ENCODE measurements at regions of chr11 and their contacts with region 1.

Region 1: DNA sequence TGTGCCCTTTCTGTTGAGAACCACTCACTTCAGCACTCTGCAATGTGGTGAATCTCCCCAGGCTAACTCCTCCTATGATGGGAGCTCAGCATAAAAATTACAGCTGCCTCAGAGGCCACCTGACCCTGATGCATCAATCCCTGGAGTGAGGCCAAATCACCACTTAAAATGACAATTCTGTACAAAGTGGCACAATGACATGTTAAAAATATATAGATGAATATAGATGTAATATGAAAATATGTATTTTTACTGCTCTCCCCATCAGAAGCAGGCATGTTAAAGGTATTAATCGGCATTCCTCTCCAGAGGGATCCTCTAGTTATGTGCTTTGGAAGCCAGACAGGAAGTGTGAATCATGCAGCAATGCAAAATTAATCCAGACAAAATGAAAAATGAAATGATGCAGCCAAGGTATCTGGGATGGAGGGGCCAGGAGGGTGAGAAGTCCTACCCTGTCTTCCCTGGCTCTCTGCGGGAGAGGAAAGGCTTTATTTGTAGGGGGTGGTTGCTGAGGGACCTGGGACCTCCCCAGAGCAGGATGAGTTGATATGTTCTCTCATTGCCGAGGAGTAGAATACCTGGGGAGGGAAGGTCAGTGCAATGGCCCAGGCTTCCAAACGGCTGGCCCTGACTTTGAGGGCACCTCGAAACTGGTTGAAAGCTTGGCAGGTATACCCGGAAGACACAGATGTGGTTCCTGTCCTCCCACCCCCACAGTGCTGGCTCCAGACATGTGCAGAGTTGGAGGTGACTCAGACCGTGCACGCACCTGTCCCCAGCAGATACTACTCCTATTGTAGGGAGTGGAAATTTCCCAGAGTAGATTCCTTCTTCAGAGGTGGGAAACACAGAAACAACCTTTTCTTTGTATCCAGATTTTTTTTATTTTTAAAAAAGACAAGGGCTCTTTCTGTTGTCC is 347.9 kb upstream of the NCAM1 start:
- DNase-seq: peak; percentile 76
- H3K4me3 ChIP-seq: no peak overlapping the region
- H3K27ac ChIP-seq: no peak overlapping the region
- H3K4me1 ChIP-seq: peaks cover 60% of the 10 kb centered on the region
- H3K27me3 ChIP-seq: no peaks in the 10 kb centered on the region
- CTCF ChIP-seq: no peak

Region 2: GRCh38 chr11:112634551-112634950 is 21.2 kb after region 1 on chr11:
- CTCF ChIA-PET with region 1: no interaction called
- POLR2A ChIA-PET with region 1: no interaction called
- intact Hi-C with region 1: loop called (anchors 1 kb)
- DNase-seq: peak; percentile 96
- H3K4me3 ChIP-seq: peak overlapping the region; percentile 8
- H3K27ac ChIP-seq: peak overlapping the region; percentile 68
- H3K4me1 ChIP-seq: peaks cover 43% of the 10 kb centered on the region
- H3K27me3 ChIP-seq: no peaks in the 10 kb centered on the region
- CTCF ChIP-seq: peak; percentile 20; the same call in 1 of the 2 replicates

Region 3: DNA sequence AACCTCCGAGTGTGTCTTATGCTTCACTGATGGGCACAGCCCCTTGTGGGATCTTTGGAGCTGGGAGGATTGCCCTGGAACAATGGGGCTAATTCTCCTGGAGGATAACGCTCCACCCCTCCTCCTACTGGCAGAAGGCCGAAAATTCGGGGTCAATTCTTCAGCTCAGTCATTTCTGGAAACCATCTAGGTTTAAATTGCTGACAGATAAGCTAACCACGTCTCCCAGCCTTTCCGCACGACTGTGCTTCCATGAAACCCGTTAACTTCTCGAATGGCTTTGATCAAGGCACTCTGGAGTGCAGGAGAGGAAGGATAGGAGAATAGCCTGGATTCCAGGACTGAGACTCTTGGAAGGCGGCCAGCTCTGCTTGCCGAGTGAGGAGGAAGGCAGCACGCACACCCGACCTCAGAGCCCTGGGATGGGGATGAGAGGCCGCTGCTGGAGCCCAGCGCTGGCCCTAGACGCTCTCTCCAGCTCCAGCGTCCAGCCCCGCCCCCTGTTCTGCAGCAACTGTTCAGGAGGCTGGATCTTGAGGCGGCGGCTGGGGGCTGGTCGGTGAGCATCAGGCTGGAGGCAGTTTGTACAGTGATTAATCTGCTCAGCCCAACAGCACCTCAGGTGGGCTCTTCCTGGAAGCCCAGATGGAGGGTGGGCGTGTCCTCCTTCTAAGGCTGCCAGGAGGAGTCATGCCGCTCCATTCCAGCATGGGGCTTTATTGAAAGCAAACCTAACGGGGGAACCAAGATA is 171.2 kb after region 1 on chr11:
- CTCF ChIA-PET with region 1: no interaction called
- POLR2A ChIA-PET with region 1: no interaction called
- intact Hi-C with region 1: loop called (anchors 5 kb)
- DNase-seq: peak; percentile 78
- H3K4me3 ChIP-seq: peak overlapping the region; percentile 40
- H3K27ac ChIP-seq: no peak overlapping the region
- H3K4me1 ChIP-seq: peaks cover 20% of the 10 kb centered on the region
- H3K27me3 ChIP-seq: no peaks in the 10 kb centered on the region
- CTCF ChIP-seq: peak; percentile 24; the same call in 1 of the 2 replicates

Region 4: GRCh38 chr11:112961146-112961668 is 347.9 kb after region 1 on chr11 and contains the start of gene NCAM1:
- CTCF ChIA-PET with region 1: no interaction called
- POLR2A ChIA-PET with region 1: no interaction called
- intact Hi-C with region 1: loop called (anchors 2 kb)
- DNase-seq: peak; percentile 96
- H3K4me3 ChIP-seq: peak within 1 kb of the TSS; percentile 61
- H3K27ac ChIP-seq: no peak within 1 kb of the TSS
- H3K4me1 ChIP-seq: peaks cover 3% of the 10 kb centered on the region
- H3K27me3 ChIP-seq: peaks cover 35% of the 10 kb centered on the region
- CTCF ChIP-seq: no peak
- total RNA-seq, gene NCAM1: 12.0 and 14.3 TPM in 2 replicates

Region 5: DNA sequence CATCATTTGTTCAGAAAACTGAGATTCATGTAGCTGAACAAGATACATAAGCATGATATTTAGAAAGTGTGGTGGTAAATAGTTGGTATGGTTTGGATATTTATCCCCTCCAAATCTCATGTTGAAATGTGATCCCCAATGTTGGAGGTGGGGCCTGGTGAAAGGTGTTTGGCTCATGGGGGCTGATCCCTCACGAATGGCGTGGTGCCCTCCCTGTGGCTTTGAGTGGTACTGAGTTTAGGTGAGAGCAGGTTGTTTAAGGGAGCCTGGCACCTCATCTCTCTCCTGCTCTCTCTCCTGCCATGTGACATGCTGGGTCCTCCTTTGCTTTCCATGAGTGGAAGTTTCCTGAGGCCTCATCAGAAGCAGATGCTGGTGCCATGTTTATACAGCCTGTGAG is 1898.2 kb after region 1 on chr11:
- CTCF ChIA-PET with region 1: no interaction called
- POLR2A ChIA-PET with region 1: no interaction called
- intact Hi-C with region 1: no loop called
- DNase-seq: no peak
- H3K4me3 ChIP-seq: no peak overlapping the region
- H3K27ac ChIP-seq: no peak overlapping the region
- H3K4me1 ChIP-seq: no peaks in the 10 kb centered on the region
- H3K27me3 ChIP-seq: no peaks in the 10 kb centered on the region
- CTCF ChIP-seq: no peak